ENCODE measurements at regions of chr15 and their contacts with region 1.

Region 1: DNA sequence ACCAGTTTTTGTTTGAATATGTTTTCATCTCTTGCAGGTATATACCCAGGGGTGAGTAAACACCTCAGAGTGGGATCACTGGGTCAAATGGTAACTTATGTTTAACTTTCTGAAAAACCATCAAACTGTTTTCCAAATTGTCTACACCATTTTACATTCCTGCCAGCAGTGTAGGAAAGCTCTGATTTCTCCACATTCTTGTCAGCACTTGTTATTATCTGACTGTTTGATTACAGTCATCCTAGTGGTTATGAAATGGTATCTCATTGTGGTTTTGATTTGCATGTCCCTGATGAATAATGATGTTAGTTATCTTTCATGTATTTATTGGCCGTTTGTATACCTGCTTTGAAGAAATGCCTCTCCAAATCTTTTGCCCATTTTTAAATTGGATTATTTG is 13.8 kb downstream of the FSD2 start:
- DNase-seq: no peak
- ATAC-seq: no peak
- H3K4me3 ChIP-seq: no peak overlapping the region
- H3K27ac ChIP-seq: no peak overlapping the region
- H3K4me1 ChIP-seq: peaks cover 0 to 8% (median 0%) of the 10 kb centered on the region in 12 donors
- H3K27me3 ChIP-seq: no peaks in the 10 kb centered on the region
- CTCF ChIP-seq: no peak
- POLR2A ChIP-seq: no peak

Region 2: GRCh38 chr15:82763361-82764116 is 28.5 kb before region 1 on chr15:
- intact Hi-C with region 1: loop called in 1 of 10 experiments (anchors 2 kb)
- DNase-seq: no peak
- ATAC-seq: no peak
- H3K4me3 ChIP-seq: no peak overlapping the region
- H3K27ac ChIP-seq: no peak overlapping the region
- H3K4me1 ChIP-seq: peaks cover 0 to 8% (median 0%) of the 10 kb centered on the region in 12 donors
- H3K27me3 ChIP-seq: no peaks in the 10 kb centered on the region
- CTCF ChIP-seq: no peak
- POLR2A ChIP-seq: no peak

Region 3: GRCh38 chr15:82882273-82882928 is 90.3 kb after region 1 on chr15:
- intact Hi-C with region 1: no loop called
- DNase-seq: no peak
- ATAC-seq: peak in 1 of 4 donors; percentile 27
- H3K4me3 ChIP-seq: no peak overlapping the region
- H3K27ac ChIP-seq: no peak overlapping the region
- H3K4me1 ChIP-seq: no peaks in the 10 kb centered on the region
- H3K27me3 ChIP-seq: no peaks in the 10 kb centered on the region
- CTCF ChIP-seq: no peak
- POLR2A ChIP-seq: no peak